ENCODE measurements at regions of chr19 and their contacts with region 1.

Region 1: DNA sequence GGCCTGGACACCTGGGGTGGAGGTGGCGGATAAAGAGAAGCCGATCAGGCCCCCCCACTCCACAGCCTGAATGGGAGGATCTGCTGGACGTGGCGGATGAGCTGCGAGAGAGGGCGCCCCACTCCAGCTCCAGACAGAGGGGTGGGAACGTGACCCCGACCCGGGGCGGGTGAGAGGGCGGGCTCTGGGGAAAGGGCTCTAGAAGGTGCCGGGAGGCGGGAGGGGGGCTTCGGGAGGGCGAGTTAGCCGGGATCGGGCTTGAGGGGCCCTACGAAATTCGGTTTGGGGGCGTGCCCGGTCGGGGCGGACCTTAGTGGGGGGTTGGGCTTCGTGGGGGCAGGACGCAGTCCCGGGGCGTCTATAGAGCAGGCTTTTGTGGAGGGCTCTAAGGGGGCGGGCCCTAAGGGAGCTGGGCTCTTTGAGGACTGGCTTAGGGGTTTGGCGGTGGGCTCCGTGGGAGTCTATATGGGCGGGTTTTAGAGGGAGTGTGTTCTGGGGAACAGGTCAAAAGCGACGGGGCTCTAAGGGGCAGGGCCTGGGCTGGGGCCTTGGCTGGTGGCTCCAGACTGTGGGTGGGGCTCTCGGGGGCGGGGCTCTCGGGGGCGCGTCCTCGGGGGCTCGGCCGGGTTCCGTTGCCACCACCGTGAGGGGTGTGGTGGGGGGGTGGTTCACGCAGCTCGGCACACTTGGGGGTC is 4.1 kb upstream of the NANOS3 start:
- DNase-seq: peak; percentile 40 to 42
- ATAC-seq: peak; percentile 41 to 60 (median 53)
- H3K4me3 ChIP-seq: peak overlapping the region; percentile 18 to 53 (median 46)
- H3K27ac ChIP-seq: no peak overlapping the region
- H3K4me1 ChIP-seq: peaks cover 0 to 9% (median 0%) of the 10 kb centered on the region in 9 donors
- H3K27me3 ChIP-seq: peaks cover 0 to 20% (median 0%) of the 10 kb centered on the region in 7 donors
- CTCF ChIP-seq: peak in 3 of 9 donors; percentile 25 to 38 (median 29)

Region 2: GRCh38 chr19:13604902-13605586 is 267.8 kb before region 1 on chr19:
- intact Hi-C with region 1: loop called in 1 of 10 experiments (anchors 10 kb)
- DNase-seq: no peak
- ATAC-seq: no peak
- H3K4me3 ChIP-seq: no peak overlapping the region
- H3K27ac ChIP-seq: no peak overlapping the region
- H3K4me1 ChIP-seq: no peaks in the 10 kb centered on the region
- H3K27me3 ChIP-seq: peaks cover 0 to 36% (median 15%) of the 10 kb centered on the region in 7 donors
- CTCF ChIP-seq: no peak

Region 3: GRCh38 chr19:13850293-13850909 is 22.4 kb before region 1 on chr19:
- intact Hi-C with region 1: no loop called
- DNase-seq: peak; percentile 84 to 92
- ATAC-seq: peak; percentile 12 to 45 (median 33)
- H3K4me3 ChIP-seq: peak overlapping the region in 9 of 10 donors; percentile 10 to 53 (median 38)
- H3K27ac ChIP-seq: peak overlapping the region; percentile 87 to 100 (median 99)
- H3K4me1 ChIP-seq: peaks cover 25 to 61% (median 54%) of the 10 kb centered on the region in 9 donors
- H3K27me3 ChIP-seq: no peaks in the 10 kb centered on the region
- CTCF ChIP-seq: no peak